ENCODE measurements at regions of chr18 and their contacts with region 1.

Region 1: DNA sequence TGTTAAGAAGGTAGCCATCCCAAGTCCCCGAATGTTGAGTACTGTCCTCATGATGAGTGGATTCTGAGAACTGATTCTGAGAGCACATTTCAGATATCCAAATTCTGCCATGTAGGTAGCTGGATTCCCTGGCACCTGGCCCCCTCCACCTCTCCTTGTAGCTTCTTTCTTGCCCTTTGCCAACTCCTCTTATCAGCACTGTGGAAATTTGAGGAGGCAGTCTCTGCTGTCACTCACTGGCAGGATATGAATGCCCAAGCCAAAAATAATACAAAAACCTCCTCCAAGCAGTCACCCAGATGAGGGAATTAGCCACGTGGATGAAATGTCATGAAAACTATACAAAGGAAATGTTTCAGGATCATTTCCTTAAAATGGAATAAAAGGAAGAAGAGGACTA is 276.8 kb downstream of the SETBP1 start:
- DNase-seq: no peak
- CTCF ChIP-seq: no peak

Region 2: DNA sequence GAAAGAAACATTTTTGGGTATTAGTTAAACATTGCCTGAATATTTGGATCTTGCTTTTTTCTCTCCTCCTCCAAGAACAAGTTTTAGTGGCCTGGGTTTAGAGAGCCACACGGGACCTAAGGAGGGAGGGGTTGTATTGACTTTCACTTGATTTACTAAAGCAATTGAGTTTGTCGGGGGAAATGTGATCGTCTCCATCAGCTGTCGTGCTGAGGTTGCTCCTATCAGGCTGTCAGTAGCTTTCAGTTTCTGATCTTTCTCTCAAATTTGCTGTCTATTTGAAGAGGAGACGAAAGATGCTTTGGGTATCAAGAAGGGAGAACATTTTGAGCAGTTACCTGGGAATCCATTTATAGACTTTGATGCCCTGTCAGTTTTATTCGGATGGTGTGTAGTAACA is 170.8 kb before region 1 on chr18:
- CTCF ChIA-PET with region 1: no interaction called
- POLR2A ChIA-PET with region 1: no interaction called
- DNase-seq: peak; percentile 49
- CTCF ChIP-seq: no peak

Region 3: GRCh38 chr18:44943311-44943881 is 14.0 kb before region 1 on chr18:
- CTCF ChIA-PET with region 1: interaction called, 12 read pairs
- POLR2A ChIA-PET with region 1: no interaction called
- DNase-seq: no peak
- CTCF ChIP-seq: no peak

Region 4: DNA sequence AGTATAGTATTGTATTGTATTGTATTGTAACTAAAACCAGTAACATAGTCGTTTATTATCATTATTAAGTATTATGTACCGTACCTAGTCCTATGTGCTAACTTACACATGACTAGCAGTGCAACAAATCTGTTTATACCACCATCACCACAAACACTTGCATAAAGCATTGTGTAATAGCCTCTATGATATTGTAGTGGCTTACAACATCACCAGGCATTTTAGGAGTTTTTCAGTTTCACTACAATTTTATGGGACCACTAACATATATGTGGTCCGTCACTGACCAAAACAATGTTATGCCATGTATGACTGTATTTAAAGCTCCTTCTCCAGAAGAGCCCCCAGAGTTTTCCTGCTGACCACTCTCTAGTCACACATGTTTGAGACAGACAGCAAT is 29.5 kb after region 1 on chr18:
- CTCF ChIA-PET with region 1: no interaction called
- POLR2A ChIA-PET with region 1: no interaction called
- DNase-seq: no peak
- CTCF ChIP-seq: no peak

Measured in GM10248 (cell line).